WTC11 (cell line): ENCODE measurements at regions of chr6 and their contacts with region 1.

Region 1: DNA sequence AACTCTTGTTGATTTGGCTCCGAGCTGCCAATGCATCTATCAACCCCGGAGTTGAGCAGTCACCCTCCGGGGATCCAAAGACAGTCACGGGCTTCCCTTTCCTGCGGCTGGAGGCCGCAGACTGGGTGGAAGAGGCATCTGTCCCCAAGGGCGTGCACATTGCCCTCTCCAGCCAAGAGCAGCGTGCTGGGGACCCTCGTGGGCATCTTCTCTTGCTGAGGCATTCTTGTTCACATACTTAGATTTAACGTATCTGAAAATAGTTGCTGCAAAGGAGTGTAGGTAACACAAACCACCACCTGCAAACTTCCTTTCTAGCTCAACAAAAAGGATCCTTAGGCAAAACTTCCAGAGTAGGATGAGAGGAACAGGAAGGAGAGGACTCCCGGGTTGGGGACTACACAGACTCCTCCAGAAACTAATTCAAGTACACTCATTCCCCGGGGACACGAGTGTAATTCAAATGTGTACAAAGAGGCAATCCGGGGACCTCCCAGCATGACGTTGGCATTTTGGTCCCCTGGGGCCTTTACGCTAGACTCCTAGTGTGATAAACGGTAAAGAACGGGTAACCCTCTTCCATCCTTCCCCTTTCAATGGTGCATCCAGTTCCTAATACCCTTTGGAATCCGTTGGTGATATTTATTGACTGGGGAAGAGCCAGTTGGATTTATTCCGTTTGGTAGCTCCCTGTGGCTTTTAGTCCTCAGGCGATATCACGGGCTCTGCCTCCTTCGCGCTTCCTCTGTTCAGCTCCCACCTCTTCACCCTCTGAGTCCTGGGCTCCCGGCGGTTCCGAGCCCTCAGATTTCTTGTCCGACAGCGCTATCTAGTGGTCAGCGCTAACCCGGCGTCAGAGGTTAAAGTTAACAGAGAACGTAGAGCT is 2.7 kb upstream of the COL12A1 start:
- DNase-seq: peak; percentile 90
- ATAC-seq: peak; percentile 38
- H3K4me3 Mint-ChIP-seq: peak overlapping the region; percentile 85
- H3K27ac Mint-ChIP-seq: no peak overlapping the region
- H3K4me1 Mint-ChIP-seq: peaks cover 79% of the 10 kb centered on the region
- H3K27me3 Mint-ChIP-seq: peaks cover 65% of the 10 kb centered on the region
- CTCF ChIP-seq: peak; percentile 72

Region 2: GRCh38 chr6:73739096-73739495 is 1469.4 kb before region 1 on chr6:
- CTCF ChIA-PET with region 1: interaction called, 18 read pairs
- POLR2A ChIA-PET with region 1: no interaction called
- DNase-seq: no peak
- ATAC-seq: peak; percentile 64
- H3K4me3 Mint-ChIP-seq: no peak overlapping the region
- H3K27ac Mint-ChIP-seq: no peak overlapping the region
- H3K4me1 Mint-ChIP-seq: peaks cover 2% of the 10 kb centered on the region; the same call in 1 of the 2 replicates
- H3K27me3 Mint-ChIP-seq: no peaks in the 10 kb centered on the region
- CTCF ChIP-seq: peak; percentile 77

Region 3: GRCh38 chr6:73969971-73970970 is 1238.3 kb before region 1 on chr6:
- CTCF ChIA-PET with region 1: interaction called, 11 read pairs
- POLR2A ChIA-PET with region 1: no interaction called
- DNase-seq: no peak
- ATAC-seq: peak; percentile 73
- H3K4me3 Mint-ChIP-seq: no peak overlapping the region
- H3K27ac Mint-ChIP-seq: no peak overlapping the region
- H3K4me1 Mint-ChIP-seq: peaks cover 14% of the 10 kb centered on the region
- H3K27me3 Mint-ChIP-seq: no peaks in the 10 kb centered on the region
- CTCF ChIP-seq: 0 out of 2 replicates have a peak, but pooled peaks have one; percentile 37

Region 4: GRCh38 chr6:74964871-74965441 is 243.6 kb before region 1 on chr6:
- CTCF ChIA-PET with region 1: interaction called, 18 read pairs
- POLR2A ChIA-PET with region 1: no interaction called
- DNase-seq: no peak
- ATAC-seq: peak; percentile 73
- H3K4me3 Mint-ChIP-seq: no peak overlapping the region
- H3K27ac Mint-ChIP-seq: no peak overlapping the region
- H3K4me1 Mint-ChIP-seq: peaks cover 13% of the 10 kb centered on the region
- H3K27me3 Mint-ChIP-seq: peaks cover 2% of the 10 kb centered on the region; the same call in 1 of the 2 replicates
- CTCF ChIP-seq: no peak

Region 5: GRCh38 chr6:75176076-75176582 is 32.4 kb before region 1 on chr6:
- CTCF ChIA-PET with region 1: interaction called, 13 read pairs
- POLR2A ChIA-PET with region 1: no interaction called
- DNase-seq: no peak
- ATAC-seq: no peak
- H3K4me3 Mint-ChIP-seq: no peak overlapping the region
- H3K27ac Mint-ChIP-seq: no peak overlapping the region
- H3K4me1 Mint-ChIP-seq: peaks cover 6% of the 10 kb centered on the region
- H3K27me3 Mint-ChIP-seq: no peaks in the 10 kb centered on the region
- CTCF ChIP-seq: no peak